Left lung (tissue), 14 donors: ENCODE measurements at regions of chr9 and their contacts with region 1.

Region 1: GRCh38 chr9:26946753-26947727 is at the start of gene PLAA:
- DNase-seq: peak; percentile 93 to 95 (median 94)
- ATAC-seq: peak; percentile 100
- H3K4me3 ChIP-seq: peak within 1 kb of the TSS; percentile 90 to 98
- H3K27ac ChIP-seq: peak within 1 kb of the TSS; percentile 96
- H3K4me1 ChIP-seq: peaks cover 14 to 40% of the 10 kb centered on the region in 2 donors
- H3K27me3 ChIP-seq: no peaks in the 10 kb centered on the region
- CTCF ChIP-seq: peak in 1 of 2 donors; percentile 25
- polyA plus RNA-seq, gene PLAA: 31.1 to 36.8 (median 34.1) TPM

Region 2: GRCh38 chr9:26850995-26851394 is 96.0 kb before region 1 on chr9:
- intact Hi-C with region 1: no loop called
- DNase-seq: no peak
- ATAC-seq: no peak
- H3K4me3 ChIP-seq: no peak overlapping the region
- H3K27ac ChIP-seq: no peak overlapping the region
- H3K4me1 ChIP-seq: no peaks in the 10 kb centered on the region
- H3K27me3 ChIP-seq: no peaks in the 10 kb centered on the region
- CTCF ChIP-seq: no peak

Region 3: GRCh38 chr9:26892251-26893029 is 54.6 kb before region 1 on chr9 and contains the start of gene CAAP1:
- intact Hi-C with region 1: loop called in 1 of 2 experiments (anchors 10 kb)
- DNase-seq: peak; percentile 93 to 97 (median 96)
- ATAC-seq: peak; percentile 99
- H3K4me3 ChIP-seq: peak within 1 kb of the TSS; percentile 89 to 99
- H3K27ac ChIP-seq: peak within 1 kb of the TSS; percentile 98
- H3K4me1 ChIP-seq: peaks cover 9 to 26% of the 10 kb centered on the region in 2 donors
- H3K27me3 ChIP-seq: no peaks in the 10 kb centered on the region
- CTCF ChIP-seq: peak; percentile 11 to 14
- polyA plus RNA-seq, gene CAAP1: 26.8 to 34.9 (median 29.5) TPM